Activated CD4-positive, alpha-beta T cell treated with anti-CD3 and anti-CD28 coated beads, Interleukin-2, amount 10 ng/mL, durations not matched to agents 24 days and 14 days (primary cell): ENCODE measurements at regions of chr14 and their contacts with region 1.

Region 1: GRCh38 chr14:31207755-31208545 is at the start of gene HECTD1:
- DNase-seq: peak; percentile 96
- H3K4me3 Mint-ChIP-seq: peak within 1 kb of the TSS; percentile 86
- H3K27ac Mint-ChIP-seq: peak within 1 kb of the TSS; percentile 100
- H3K4me1 Mint-ChIP-seq: peaks cover 32% of the 10 kb centered on the region
- H3K27me3 Mint-ChIP-seq: no peaks in the 10 kb centered on the region
- total RNA-seq, gene HECTD1: 116 TPM in 2 replicates

Region 2: DNA sequence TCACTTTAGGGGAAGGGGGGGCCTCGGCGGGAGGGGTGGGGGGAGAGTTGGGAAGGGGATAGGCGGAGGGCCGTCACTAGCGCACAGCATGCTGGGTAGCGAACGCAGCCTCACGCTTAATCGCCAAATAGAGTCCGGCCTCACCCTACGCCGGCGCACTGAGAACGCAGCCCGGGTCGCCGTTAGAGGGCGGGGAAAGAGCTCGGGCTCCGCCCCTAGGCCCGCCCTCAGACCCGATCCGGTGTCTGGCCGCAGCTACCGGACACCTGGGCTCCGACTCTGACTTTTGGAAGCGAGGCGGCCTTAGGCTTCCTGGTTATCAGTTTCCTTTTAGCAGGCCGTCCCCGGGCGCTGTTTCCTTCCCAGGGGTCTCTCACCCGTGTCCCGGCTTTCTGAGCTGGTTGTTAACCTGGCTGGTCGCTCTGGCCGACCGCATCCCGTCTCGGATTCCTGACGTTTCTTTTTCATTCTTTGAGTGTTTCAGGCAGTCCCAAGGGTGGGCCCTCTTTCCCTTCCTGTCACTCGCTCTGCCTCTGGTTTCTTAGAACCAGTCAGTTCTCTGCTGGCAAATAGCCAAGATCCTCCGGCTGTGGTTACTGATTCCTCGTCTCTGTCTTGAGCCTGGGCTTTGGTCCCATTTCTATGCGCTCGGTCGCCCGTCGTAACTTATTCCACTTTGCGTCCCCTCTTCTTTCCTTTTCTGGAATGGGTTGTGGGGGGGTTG is 181.4 kb before region 1 on chr14:
- intact Hi-C with region 1: loop called (anchors 1 kb)
- DNase-seq: peak; percentile 98
- H3K4me3 Mint-ChIP-seq: peak overlapping the region; percentile 92
- H3K27ac Mint-ChIP-seq: peak overlapping the region; percentile 93
- H3K4me1 Mint-ChIP-seq: peaks cover 52% of the 10 kb centered on the region
- H3K27me3 Mint-ChIP-seq: no peaks in the 10 kb centered on the region

Region 3: DNA sequence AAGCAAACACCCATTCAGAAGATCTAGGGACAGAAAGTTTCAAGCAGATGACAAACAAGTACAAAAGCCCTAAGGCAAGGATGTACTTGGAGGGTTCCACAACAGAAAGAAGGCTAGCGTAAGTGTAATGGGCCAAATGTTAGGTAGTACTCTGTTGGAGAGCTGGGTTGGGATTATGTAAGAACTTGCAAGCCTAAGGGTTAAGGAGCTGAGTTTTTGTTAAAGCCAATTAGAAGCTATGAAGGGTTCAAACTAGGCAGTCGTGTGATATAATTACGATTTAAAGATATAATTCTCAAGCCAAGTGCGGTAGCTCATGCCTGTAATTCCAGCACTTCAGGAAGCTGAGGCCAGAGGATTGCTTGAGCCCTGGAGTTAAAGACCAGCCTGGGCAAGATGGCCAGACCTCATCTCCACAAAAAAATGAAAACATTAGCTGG is 41.7 kb before region 1 on chr14:
- intact Hi-C with region 1: no loop called
- DNase-seq: no peak
- H3K4me3 Mint-ChIP-seq: no peak overlapping the region
- H3K27ac Mint-ChIP-seq: no peak overlapping the region
- H3K4me1 Mint-ChIP-seq: no peaks in the 10 kb centered on the region
- H3K27me3 Mint-ChIP-seq: no peaks in the 10 kb centered on the region

Region 4: GRCh38 chr14:31197671-31198070 is 10.3 kb before region 1 on chr14:
- intact Hi-C with region 1: loop called (anchors 1 kb)
- DNase-seq: no peak
- H3K4me3 Mint-ChIP-seq: no peak overlapping the region
- H3K27ac Mint-ChIP-seq: peak overlapping the region; percentile 52
- H3K4me1 Mint-ChIP-seq: peaks cover 33% of the 10 kb centered on the region
- H3K27me3 Mint-ChIP-seq: no peaks in the 10 kb centered on the region

Region 5: GRCh38 chr14:31360919-31361662 is 153.1 kb after region 1 on chr14:
- intact Hi-C with region 1: loop called (anchors 1 kb)
- DNase-seq: no peak
- H3K4me3 Mint-ChIP-seq: no peak overlapping the region
- H3K27ac Mint-ChIP-seq: no peak overlapping the region
- H3K4me1 Mint-ChIP-seq: no peaks in the 10 kb centered on the region
- H3K27me3 Mint-ChIP-seq: no peaks in the 10 kb centered on the region

Region 6: DNA sequence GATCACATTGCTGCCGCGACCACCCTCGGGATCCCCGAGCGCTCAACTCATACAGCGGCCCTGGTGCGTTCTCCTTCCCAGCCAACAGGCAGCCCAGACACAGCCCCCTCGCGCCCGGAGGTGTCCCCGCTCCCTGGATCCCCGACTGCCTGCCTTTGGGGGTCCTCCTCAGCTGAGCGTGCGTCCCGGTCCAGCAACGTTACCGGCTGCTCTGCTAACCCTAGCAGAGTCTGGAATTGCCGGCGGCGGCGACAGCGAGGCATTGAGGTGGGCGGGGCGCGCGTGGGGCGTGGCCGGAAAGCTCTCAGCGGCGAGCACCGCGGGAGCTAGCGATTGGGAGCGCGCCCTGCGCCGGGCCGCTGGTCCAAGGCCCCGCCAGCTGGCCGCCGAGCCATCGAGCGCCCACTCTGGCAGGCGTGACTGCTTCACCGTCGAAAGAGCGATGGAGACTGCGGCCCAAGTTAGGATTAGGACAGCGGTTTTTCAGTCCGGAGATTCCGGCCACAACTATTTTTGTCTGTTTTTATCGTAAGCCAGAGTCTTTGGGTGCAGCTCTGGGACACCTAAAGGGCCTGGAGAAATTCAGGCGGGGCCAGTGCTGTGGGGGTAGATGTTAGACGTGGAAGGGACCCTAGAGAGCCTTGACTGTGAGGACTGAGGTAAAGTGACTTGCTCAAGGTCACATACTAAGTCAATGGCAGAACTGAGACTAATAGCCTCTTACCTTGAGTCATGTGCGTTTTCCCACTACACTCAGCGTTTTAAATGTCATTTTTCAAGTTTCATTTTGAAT is 212.6 kb after region 1 on chr14 and contains the start of gene HEATR5A:
- intact Hi-C with region 1: loop called (anchors 1 kb)
- DNase-seq: peak; percentile 98
- H3K4me3 Mint-ChIP-seq: peak within 1 kb of the TSS; percentile 94
- H3K27ac Mint-ChIP-seq: peak within 1 kb of the TSS; percentile 95
- H3K4me1 Mint-ChIP-seq: peaks cover 24% of the 10 kb centered on the region
- H3K27me3 Mint-ChIP-seq: peaks cover 2% of the 10 kb centered on the region
- total RNA-seq, gene HEATR5A: 23.6 and 24.2 TPM in 2 replicates

Region 7: GRCh38 chr14:31561155-31561846 is 353.4 kb after region 1 on chr14 and contains the start of gene NUBPL:
- intact Hi-C with region 1: loop called (anchors 5 kb)
- DNase-seq: peak; percentile 99
- H3K4me3 Mint-ChIP-seq: peak within 1 kb of the TSS; percentile 95
- H3K27ac Mint-ChIP-seq: peak within 1 kb of the TSS; percentile 97
- H3K4me1 Mint-ChIP-seq: peaks cover 16% of the 10 kb centered on the region
- H3K27me3 Mint-ChIP-seq: peaks cover 12% of the 10 kb centered on the region
- total RNA-seq, gene NUBPL: 12.1 and 12.3 TPM in 2 replicates